Dorsolateral prefrontal cortex (tissue), 120 donors: ENCODE measurements at regions of chr15 and their contacts with region 1.

Region 1: GRCh38 chr15:96122077-96122681 is 208.3 kb upstream of the NR2F2 start:
- DNase-seq: peak in 1 of 10 donors; percentile 14
- H3K4me3 ChIP-seq: no peak overlapping the region
- H3K27ac ChIP-seq: no peak overlapping the region
- H3K27me3 ChIP-seq: peaks cover 0 to 11% (median 0%) of the 10 kb centered on the region in 45 donors
- CTCF ChIP-seq: no peak

Region 2: GRCh38 chr15:96053031-96053780 is 69.0 kb before region 1 on chr15:
- intact Hi-C with region 1: no loop called
- DNase-seq: peak in 1 of 10 donors; percentile 7
- H3K4me3 ChIP-seq: peak overlapping the region in 58 of 59 donors; percentile 2 to 63 (median 36)
- H3K27ac ChIP-seq: no peak overlapping the region
- H3K27me3 ChIP-seq: peaks cover 0 to 66% (median 34%) of the 10 kb centered on the region in 45 donors
- CTCF ChIP-seq: no peak

Region 3: GRCh38 chr15:96181873-96182301 is 59.7 kb after region 1 on chr15:
- intact Hi-C with region 1: loop called in 1 of 2 experiments (anchors 10 kb)
- DNase-seq: no peak
- H3K4me3 ChIP-seq: no peak overlapping the region
- H3K27ac ChIP-seq: peak overlapping the region in 3 of 59 donors; percentile 4 to 44 (median 18)
- H3K27me3 ChIP-seq: peaks cover 0 to 15% (median 0%) of the 10 kb centered on the region in 45 donors
- CTCF ChIP-seq: no peak